Dendritic cell treated with granulocyte-macrophage colony-stimulating factor and Interleukin-4, amounts not matched to agents 40 ng/mL and 50 ng/mL, for 4 days (primary cell): ENCODE measurements at regions of chr12 and their contacts with region 1.

Region 1: GRCh38 chr12:43882578-43883178 is 46.8 kb downstream of the TMEM117 start:
- H3K4me3 Mint-ChIP-seq: no peak overlapping the region
- H3K27ac Mint-ChIP-seq: no peak overlapping the region
- H3K4me1 Mint-ChIP-seq: no peaks in the 10 kb centered on the region
- H3K27me3 Mint-ChIP-seq: no peaks in the 10 kb centered on the region

Region 2: DNA sequence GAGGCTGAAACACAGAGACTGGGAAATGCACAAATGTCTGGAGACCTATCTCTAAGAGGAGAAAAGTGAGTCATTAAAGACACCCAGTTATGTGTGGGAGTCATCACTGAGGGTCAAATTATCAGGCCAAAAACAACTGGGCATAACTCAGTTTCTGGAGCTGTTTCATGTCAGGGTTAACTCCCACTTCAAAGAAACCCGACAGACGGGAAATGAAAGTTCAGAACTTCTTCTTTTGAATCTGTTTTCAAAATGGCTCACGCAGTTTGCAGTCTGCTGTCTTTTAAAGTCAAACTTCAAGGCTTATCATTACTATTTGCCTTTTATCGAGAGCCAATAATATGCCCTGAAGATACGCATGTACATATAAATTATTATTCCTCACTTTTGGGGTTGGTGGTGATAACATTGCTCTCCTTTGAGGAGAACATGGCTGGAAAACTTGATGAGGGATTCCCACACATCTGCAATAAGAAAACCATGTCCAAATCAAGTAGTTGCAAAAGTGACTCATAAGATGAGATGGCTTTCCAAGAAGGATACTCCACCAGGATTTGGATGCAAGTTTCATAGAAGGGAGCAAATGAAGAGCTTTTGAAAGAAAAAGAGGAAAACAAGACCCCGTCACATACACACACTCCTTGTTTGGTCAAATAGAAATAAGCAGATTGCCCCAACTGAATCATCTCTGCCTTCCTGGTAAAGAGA is 672.0 kb before region 1 on chr12:
- intact Hi-C with region 1: no loop called
- H3K4me3 Mint-ChIP-seq: no peak overlapping the region
- H3K27ac Mint-ChIP-seq: peak overlapping the region; percentile 28
- H3K4me1 Mint-ChIP-seq: peaks cover 20% of the 10 kb centered on the region
- H3K27me3 Mint-ChIP-seq: no peaks in the 10 kb centered on the region

Region 3: GRCh38 chr12:43444940-43445564 is 437.6 kb before region 1 on chr12:
- intact Hi-C with region 1: loop called (anchors 2 kb)
- H3K4me3 Mint-ChIP-seq: no peak overlapping the region
- H3K27ac Mint-ChIP-seq: no peak overlapping the region
- H3K4me1 Mint-ChIP-seq: no peaks in the 10 kb centered on the region
- H3K27me3 Mint-ChIP-seq: no peaks in the 10 kb centered on the region

Region 4: GRCh38 chr12:43776498-43776897 is 106.2 kb before region 1 on chr12:
- intact Hi-C with region 1: loop called (anchors 1 kb)
- H3K4me3 Mint-ChIP-seq: no peak overlapping the region
- H3K27ac Mint-ChIP-seq: no peak overlapping the region
- H3K4me1 Mint-ChIP-seq: no peaks in the 10 kb centered on the region
- H3K27me3 Mint-ChIP-seq: no peaks in the 10 kb centered on the region

Region 5: DNA sequence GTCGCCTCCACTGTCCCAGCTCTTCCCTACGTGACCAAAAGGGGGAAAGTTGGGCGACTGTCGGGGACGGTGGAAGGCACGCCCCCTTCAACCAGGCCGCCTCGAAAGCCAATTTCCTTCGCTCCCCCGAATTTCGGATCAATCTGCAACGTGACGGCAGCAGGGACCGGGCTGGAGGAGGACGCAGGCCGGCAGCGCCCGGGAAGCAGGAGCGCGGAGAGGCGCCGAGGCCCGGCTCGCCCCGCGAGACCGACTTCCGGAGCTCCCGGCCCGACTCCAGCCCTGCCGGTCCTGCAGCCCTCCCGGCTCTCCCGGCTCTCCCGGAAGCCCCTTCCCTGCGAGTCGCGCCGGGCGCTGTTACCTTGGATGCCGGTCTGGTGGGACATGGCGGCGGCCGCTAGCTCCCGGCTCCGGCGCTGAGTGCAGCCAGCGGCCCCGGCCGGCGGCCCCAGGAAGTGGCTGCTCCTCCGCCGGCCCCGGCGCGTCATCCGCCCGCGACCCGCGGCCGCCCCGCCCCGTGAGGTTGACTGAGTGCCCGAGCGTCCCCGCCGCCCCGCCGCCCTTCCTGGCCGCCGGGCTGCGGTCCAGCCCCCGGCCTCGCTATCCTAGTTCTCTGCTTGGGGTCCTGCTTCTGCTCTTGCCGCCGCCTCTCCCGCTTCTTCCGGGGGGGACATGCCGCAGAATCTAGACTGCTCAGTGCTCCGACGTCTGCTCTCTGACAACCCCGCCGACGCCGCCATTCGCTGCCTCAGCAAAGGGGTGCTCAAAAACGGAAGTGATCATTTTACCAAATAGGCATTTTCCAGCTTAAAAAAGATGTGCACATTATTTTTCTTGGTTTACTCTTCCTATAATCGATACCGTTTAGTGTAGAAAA is 76.6 kb before region 1 on chr12 and contains the start of gene TWF1:
- intact Hi-C with region 1: loop called (anchors 2 kb)
- H3K4me3 Mint-ChIP-seq: peak within 1 kb of the TSS; percentile 100
- H3K27ac Mint-ChIP-seq: peak within 1 kb of the TSS; percentile 99
- H3K4me1 Mint-ChIP-seq: peaks cover 22% of the 10 kb centered on the region
- H3K27me3 Mint-ChIP-seq: peaks cover 5% of the 10 kb centered on the region